H1 (cell line): ENCODE measurements at regions of chr6 and their contacts with region 1.

Region 1: GRCh38 chr6:150068720-150069648 is at the start of gene ULBP3:
- DNase-seq: peak; percentile 76 to 85
- H3K4me3 ChIP-seq: peak within 1 kb of the TSS; percentile 49 to 73 (median 60)
- H3K27ac ChIP-seq: no peak within 1 kb of the TSS
- H3K4me1 ChIP-seq: peaks cover 0 to 2% (median 0%) of the 10 kb centered on the region in 4 experiments; a peak in 2 of 7 replicates
- H3K27me3 ChIP-seq: peaks cover 0 to 22% (median 13%) of the 10 kb centered on the region in 4 experiments; a peak in 5 of 7 replicates
- CTCF ChIP-seq: peak; percentile 25 to 58 (median 51)
- EP300 ChIP-seq: no peak
- POLR2A ChIP-seq: peak in 1 of 2 experiments; percentile 56; a peak in 1 of 3 replicates
- RAD21 ChIP-seq: peak; percentile 38 to 53; a peak in 3 of 4 replicates
- total RNA-seq, gene ULBP3: 3.3 and 4.2 TPM in 2 replicates

Region 2: DNA sequence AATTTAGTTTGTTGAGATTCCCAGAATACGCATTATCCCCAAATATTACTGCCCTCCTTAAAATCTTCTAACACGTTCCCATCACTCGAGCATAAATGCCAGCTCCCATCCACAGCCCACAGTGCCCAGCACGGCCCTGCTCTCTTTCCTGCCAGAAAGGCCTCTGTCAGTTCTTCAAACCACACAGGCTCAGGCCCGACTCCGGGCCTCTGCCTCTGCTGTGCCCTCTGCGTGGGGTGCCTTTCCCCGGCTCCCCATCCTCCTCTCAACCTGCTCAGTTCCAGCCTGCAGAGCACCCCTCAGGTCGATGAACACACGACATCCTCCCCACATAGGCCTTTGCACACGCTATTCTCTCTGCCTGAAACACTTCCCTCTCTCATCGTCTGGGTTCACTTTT is 12.8 kb before region 1 on chr6:
- CTCF ChIA-PET with region 1: interaction called, 54 read pairs
- POLR2A ChIA-PET with region 1: interaction called, 15 read pairs
- DNase-seq: no peak
- H3K4me3 ChIP-seq: no peak overlapping the region
- H3K27ac ChIP-seq: no peak overlapping the region
- H3K4me1 ChIP-seq: no peaks in the 10 kb centered on the region
- H3K27me3 ChIP-seq: peaks cover 0 to 2% (median 0%) of the 10 kb centered on the region in 4 experiments; a peak in 3 of 7 replicates
- CTCF ChIP-seq: no peak
- EP300 ChIP-seq: no peak
- POLR2A ChIP-seq: no peak
- RAD21 ChIP-seq: no peak

Region 3: GRCh38 chr6:150349546-150349945 is 280.6 kb after region 1 on chr6:
- CTCF ChIA-PET with region 1: interaction called, 10 read pairs
- POLR2A ChIA-PET with region 1: no interaction called
- DNase-seq: no peak
- H3K4me3 ChIP-seq: no peak overlapping the region
- H3K27ac ChIP-seq: no peak overlapping the region
- H3K4me1 ChIP-seq: no peaks in the 10 kb centered on the region
- H3K27me3 ChIP-seq: no peaks in the 10 kb centered on the region
- CTCF ChIP-seq: no peak
- EP300 ChIP-seq: no peak
- POLR2A ChIP-seq: no peak
- RAD21 ChIP-seq: no peak